HEK293T (cell line): ENCODE measurements at regions of chr6 and their contacts with region 1.

Region 1: DNA sequence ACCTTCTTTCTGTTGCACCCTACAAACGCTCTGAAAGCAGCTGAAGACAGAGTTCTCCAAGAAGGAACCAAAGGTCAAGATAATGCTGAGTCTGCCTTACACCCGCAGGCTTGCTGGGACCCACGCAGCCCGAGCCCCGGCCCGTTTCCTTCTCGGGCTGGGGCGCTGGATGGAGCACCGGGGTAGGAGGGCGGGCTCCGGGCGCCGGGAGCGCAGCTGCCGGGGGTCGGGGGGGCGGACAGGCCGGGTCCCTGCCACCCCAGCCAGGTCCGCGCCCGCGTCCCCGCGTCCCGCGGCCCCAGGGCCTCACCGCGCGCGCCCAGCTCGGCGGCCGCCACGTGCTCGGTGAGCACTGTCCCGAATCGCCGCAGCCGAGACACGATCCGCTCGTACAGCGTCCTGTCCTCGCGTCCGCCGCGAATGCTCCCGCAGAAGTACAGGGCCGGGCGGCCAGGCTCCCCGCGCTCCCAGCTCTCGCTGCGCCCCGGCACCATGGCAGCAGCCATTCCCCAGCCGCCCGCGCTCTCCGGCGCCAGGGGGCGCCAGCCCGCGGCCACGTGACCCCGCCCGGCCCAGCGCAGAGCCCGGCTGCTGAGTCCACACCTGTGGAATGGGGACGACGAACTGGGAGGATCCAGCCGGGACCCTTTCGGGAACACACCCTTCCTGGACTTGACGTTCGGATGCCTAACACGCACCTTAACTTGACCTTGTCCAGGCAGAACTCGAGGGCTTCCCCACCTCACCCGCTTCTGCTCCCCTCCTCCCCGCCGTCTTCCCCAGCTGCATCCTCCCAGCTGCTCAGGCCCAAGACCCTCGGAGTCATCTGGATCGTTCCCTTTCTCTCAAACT is at the start of gene DNPH1:
- DNase-seq: peak; percentile 90

Region 2: DNA sequence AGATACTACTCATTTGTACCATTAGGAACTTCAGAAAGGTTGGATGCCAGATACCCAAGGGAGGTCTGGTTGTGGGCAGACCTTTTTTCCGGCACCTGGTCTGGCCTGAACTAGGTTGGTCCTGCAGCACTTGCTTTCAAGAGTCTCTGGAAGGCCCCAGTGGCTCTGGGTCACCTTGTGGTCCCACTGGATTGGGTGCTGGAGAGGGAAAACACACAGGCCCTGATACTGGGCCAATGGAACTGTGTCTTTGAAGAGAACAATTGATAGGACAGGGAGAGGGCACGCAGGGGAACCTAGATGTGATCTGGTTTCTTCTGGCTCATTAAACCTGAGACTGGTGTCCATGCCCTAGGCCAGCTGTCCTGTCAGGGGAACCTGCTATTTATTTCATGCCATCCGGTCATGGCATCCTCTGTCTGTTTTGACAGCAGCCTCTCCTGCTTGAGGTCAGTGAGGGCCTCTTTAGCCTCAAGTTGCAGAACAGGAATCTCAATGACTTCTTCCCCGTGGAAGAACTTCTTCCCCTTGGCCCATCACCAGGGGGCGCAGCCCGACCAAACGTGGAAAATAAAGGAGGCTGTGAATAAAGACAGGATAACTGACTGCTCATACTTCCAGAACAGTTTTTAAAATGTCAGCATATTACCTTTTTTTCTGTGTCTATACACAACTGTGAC is 1153.9 kb before region 1 on chr6:
- CTCF ChIA-PET with region 1: no interaction called
- POLR2A ChIA-PET with region 1: no interaction called
- DNase-seq: peak; percentile 74

Region 3: DNA sequence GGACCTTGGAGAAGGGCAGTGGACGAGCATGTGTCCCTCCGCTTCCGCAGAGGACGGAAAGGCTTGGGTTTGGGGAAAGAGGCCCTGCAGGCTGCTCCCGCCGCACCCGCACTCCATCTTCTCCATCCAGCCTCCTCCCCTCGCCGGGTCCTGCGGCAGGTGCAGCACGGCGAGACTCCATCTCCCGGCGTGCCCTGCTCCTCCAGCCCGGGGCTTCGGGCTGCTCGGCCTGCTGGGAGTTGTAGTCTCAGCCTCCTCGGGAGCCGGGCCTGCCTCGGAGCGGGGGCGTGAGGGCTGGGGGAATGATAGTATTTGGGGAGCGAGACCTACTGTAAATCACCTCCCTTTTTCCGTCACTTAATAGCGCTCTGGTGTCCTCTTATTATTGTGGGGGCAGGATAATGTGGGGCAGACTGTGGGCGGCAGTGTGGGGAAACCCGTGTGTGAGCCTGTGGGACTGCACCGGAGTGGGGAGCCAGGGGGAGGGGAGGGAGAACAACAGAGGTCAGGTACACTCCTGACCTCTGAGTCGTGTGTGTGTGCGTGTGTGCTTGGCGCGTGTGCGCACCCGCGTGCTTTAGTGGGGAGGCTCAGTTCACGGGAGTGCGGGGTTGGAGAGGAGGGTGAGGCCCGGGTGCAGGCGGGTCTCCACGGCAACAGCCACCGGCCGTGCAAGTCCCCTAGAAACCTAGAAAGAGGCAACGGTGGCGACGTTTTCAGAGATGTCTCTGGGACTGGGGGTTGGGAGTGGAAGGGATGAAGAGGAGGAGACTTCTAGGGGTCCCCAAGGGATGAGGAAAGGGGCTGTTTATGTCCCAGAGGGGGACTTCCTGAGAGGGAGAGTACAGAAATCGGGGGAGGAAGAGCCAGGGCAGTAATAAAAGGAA is 18.2 kb after region 1 on chr6:
- CTCF ChIA-PET with region 1: interaction called, 6 read pairs
- POLR2A ChIA-PET with region 1: interaction called, 12 read pairs
- DNase-seq: peak; percentile 95

Region 4: DNA sequence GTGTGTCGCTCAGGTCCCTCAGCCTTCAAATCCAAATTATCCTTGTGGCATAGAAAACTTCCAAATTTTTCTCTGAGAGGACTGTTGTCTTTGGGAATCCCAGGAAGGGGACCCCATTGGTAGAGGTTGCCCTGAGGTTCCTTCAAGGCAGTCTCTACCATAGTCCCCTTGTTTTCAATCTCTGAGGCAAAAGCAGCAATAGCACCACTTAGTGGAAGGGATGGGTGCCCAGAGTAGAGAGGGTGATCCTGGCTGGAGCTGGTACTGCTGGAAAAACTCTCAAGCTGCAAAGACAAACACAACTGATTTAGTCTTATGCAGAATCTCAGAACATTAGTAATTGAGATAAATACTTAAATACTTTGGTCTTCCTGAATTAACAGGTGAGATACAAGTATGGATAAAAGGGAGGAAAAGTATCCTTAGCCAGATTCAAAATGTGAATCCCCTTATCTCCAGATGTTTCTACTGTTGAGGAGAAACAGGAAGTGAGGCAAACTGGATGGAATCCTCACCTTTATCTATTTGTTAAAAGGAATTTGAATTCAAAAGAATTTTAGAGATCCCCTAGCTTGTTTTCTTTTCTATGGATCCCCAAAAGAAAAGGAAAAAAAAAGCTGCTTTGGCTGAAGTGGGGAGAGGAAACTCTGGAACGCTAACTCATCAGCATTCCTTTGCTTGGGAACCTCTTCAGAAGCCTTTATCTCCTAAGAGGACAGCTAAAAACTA is 126.8 kb after region 1 on chr6:
- CTCF ChIA-PET with region 1: no interaction called
- POLR2A ChIA-PET with region 1: no interaction called
- DNase-seq: peak; percentile 18